Activated CD4-positive, alpha-beta T cell treated with anti-CD3 and anti-CD28 coated beads for 36 hours (primary cell): ENCODE measurements at regions of chr9 and their contacts with region 1.

Region 1: GRCh38 chr9:5437254-5438216 is at the start of gene PLGRKT:
- DNase-seq: peak; percentile 95
- ATAC-seq: peak; percentile 90
- H3K4me3 Mint-ChIP-seq: peak within 1 kb of the TSS; percentile 85
- H3K27ac Mint-ChIP-seq: peak within 1 kb of the TSS; percentile 99
- H3K4me1 Mint-ChIP-seq: peaks cover 55% of the 10 kb centered on the region
- H3K27me3 Mint-ChIP-seq: no peaks in the 10 kb centered on the region
- total RNA-seq, gene PLGRKT: 44.0 to 47.9 TPM

Region 2: GRCh38 chr9:4740638-4741364 is 696.7 kb before region 1 on chr9 and contains the start of gene AK3:
- CTCF ChIA-PET with region 1: no interaction called
- POLR2A ChIA-PET with region 1: no interaction called
- intact Hi-C with region 1: loop called in 1 of 2 experiments (anchors 5 kb)
- DNase-seq: peak; percentile 91
- ATAC-seq: peak; percentile 87
- H3K4me3 Mint-ChIP-seq: peak within 1 kb of the TSS; percentile 88
- H3K27ac Mint-ChIP-seq: peak within 1 kb of the TSS; percentile 93
- H3K4me1 Mint-ChIP-seq: peaks cover 40% of the 10 kb centered on the region
- H3K27me3 Mint-ChIP-seq: no peaks in the 10 kb centered on the region
- total RNA-seq, gene AK3: 32.6 to 41.0 TPM

Region 3: GRCh38 chr9:5402217-5402616 is 35.3 kb before region 1 on chr9:
- CTCF ChIA-PET with region 1: no interaction called
- POLR2A ChIA-PET with region 1: no interaction called
- intact Hi-C with region 1: no loop called
- DNase-seq: no peak
- ATAC-seq: no peak
- H3K4me3 Mint-ChIP-seq: no peak overlapping the region
- H3K27ac Mint-ChIP-seq: no peak overlapping the region
- H3K4me1 Mint-ChIP-seq: peaks cover 19% of the 10 kb centered on the region
- H3K27me3 Mint-ChIP-seq: no peaks in the 10 kb centered on the region

Region 4: DNA sequence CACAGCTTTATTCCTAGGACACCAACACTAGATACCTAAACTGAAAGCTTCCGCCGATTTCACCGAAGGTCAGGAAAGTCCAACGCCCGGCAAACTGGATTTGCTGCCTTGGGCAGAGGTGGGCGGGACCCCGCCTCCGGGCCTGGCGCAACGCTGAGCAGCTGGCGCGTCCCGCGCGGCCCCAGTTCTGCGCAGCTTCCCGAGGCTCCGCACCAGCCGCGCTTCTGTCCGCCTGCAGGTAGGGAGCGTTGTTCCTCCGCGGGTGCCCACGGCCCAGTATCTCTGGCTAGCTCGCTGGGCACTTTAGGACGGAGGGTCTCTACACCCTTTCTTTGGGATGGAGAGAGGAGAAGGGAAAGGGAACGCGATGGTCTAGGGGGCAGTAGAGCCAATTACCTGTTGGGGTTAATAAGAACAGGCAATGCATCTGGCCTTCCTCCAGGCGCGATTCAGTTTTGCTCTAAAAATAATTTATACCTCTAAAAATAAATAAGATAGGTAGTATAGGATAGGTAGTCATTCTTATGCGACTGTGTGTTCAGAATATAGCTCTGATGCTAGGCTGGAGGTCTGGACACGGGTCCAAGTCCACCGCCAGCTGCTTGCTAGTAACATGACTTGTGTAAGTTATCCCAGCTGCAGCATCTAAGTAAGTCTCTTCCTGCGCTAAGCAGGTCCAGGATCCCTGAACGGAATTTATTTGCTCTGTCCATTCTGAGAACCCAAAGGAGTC is 13.0 kb after region 1 on chr9 and contains the start of gene CD274:
- CTCF ChIA-PET with region 1: interaction called, 48 read pairs
- POLR2A ChIA-PET with region 1: interaction called, 23 read pairs
- intact Hi-C with region 1: loop called (anchors 1 kb)
- DNase-seq: peak; percentile 94
- ATAC-seq: peak; percentile 66
- H3K4me3 Mint-ChIP-seq: peak within 1 kb of the TSS; percentile 98
- H3K27ac Mint-ChIP-seq: peak within 1 kb of the TSS; percentile 90
- H3K4me1 Mint-ChIP-seq: peaks cover 77% of the 10 kb centered on the region
- H3K27me3 Mint-ChIP-seq: no peaks in the 10 kb centered on the region
- total RNA-seq, gene CD274: 25.0 to 30.1 TPM

Region 5: GRCh38 chr9:5582835-5583195 is 145.3 kb after region 1 on chr9:
- CTCF ChIA-PET with region 1: interaction called, 22 read pairs
- POLR2A ChIA-PET with region 1: interaction called, 6 read pairs
- intact Hi-C with region 1: loop called in 1 of 2 experiments (anchors 1 kb)
- DNase-seq: peak; percentile 69
- ATAC-seq: peak; percentile 42
- H3K4me3 Mint-ChIP-seq: no peak overlapping the region
- H3K27ac Mint-ChIP-seq: peak overlapping the region; percentile 85
- H3K4me1 Mint-ChIP-seq: peaks cover 74% of the 10 kb centered on the region
- H3K27me3 Mint-ChIP-seq: no peaks in the 10 kb centered on the region

Region 6: DNA sequence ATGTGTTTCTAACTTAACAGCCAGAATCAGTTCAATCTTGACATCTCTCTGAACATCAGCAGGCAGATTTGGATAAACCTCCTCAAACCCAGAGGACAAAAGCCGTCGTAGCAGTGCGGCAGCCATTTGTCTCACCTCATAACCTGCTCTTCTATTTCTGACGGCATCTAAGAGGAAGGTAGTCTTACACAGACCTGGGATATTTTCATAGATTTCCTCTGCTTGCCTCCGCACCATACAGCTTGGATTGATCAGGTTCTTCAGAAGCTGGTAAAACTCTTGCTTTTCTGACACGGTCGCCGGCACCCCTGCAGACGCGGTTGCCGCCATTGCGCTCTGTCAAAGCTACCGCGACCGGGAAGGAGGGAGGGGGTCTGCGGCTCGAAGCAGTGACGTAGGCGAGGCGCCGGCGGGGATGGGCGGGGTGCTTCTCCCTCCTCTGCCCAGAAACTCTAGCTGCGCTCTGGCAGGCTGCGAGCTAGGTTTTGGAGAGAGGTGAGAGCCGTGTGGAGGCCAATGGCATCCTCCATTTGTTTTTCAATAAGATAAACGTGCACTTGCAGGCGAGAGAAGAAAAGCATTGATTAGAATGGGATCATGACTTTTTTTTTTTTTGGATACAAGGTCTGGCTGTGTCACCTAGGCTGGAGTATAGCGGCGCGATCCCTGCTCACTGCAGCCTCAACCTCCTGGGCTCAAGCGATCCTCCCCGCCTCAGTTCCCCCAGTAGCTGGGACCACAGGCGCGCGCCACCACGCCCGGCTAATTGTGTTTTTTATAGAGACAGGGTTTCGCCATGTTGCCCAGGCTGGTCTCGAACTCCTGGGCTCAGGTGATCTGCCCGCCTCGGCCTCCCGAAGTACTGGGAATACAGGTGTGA is 578.0 kb after region 1 on chr9 and contains the start of gene RANBP6:
- CTCF ChIA-PET with region 1: no interaction called
- POLR2A ChIA-PET with region 1: no interaction called
- intact Hi-C with region 1: loop called in 1 of 2 experiments (anchors 2 kb)
- DNase-seq: peak; percentile 97
- ATAC-seq: peak; percentile 94
- H3K4me3 Mint-ChIP-seq: peak within 1 kb of the TSS; percentile 95
- H3K27ac Mint-ChIP-seq: peak within 1 kb of the TSS; percentile 99
- H3K4me1 Mint-ChIP-seq: peaks cover 28% of the 10 kb centered on the region
- H3K27me3 Mint-ChIP-seq: no peaks in the 10 kb centered on the region
- total RNA-seq, gene RANBP6: 11.7 to 18.2 TPM